ENCODE measurements at regions of chr6 and their contacts with region 1.

Region 1: DNA sequence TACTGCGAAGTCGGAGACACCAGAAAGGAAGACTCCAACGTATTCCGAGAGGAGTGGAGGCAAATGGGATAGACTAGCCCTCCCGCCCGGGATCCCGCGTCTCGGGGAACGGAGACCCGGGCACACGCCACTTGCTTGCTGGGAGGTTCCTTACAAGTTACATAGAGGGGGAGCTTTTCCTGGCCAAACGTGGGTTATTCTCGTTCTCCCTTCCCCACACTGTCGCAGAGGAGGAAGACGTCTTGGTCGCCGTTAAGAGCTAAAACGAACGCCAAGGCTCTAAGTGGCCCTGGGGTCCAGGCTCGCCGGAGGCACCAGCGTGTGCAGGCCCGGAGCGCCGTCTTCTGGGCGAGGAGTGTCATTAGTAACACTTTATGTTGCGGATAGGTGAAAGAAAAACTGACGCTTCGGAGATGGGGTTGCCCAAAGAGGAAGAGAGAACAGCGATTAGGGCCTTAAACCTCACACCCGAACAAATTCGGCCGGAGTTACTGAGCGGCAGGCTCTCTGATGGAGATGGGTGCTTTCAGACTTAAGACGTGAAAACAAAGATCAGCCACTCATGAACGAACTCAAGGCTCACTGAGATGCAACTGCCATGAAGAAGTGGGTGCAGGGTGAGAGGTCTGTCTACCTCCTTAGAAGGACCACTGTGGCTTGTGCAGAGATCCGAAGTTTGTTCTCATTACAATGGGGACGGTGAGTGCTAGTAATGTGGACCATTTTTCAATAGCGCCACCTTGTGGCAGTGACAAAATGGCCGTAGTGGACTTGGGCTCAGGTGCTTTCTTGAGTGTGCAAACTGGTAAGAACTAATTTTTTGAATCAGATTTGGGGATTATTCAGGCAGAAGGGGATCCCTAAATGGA is 11.7 kb upstream of the ZNF311 start:
- DNase-seq: peak; percentile 79
- CTCF ChIP-seq: peak; percentile 71

Region 2: DNA sequence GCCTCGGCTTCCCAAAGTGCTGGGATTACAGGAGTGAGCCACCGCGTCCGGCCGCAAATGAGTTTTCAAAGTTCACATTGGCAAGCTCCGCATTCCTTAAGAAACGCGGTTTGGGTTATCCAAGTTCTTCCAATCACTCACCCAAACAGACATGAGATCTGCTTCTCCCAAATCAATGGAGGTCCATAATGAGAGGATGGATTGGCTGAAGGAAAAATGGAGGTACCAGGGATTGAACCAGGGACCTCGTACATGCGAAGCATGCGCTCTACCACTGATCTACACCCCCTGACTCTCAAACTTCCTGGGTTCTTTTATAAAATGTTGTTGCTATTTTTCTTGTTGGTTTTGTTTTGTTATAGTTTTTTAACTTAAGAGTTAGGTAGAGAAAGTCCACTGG is 321.1 kb before region 1 on chr6:
- in situ Hi-C with region 1: loop called (anchors 10 kb)
- DNase-seq: no peak
- CTCF ChIP-seq: no peak

Region 3: DNA sequence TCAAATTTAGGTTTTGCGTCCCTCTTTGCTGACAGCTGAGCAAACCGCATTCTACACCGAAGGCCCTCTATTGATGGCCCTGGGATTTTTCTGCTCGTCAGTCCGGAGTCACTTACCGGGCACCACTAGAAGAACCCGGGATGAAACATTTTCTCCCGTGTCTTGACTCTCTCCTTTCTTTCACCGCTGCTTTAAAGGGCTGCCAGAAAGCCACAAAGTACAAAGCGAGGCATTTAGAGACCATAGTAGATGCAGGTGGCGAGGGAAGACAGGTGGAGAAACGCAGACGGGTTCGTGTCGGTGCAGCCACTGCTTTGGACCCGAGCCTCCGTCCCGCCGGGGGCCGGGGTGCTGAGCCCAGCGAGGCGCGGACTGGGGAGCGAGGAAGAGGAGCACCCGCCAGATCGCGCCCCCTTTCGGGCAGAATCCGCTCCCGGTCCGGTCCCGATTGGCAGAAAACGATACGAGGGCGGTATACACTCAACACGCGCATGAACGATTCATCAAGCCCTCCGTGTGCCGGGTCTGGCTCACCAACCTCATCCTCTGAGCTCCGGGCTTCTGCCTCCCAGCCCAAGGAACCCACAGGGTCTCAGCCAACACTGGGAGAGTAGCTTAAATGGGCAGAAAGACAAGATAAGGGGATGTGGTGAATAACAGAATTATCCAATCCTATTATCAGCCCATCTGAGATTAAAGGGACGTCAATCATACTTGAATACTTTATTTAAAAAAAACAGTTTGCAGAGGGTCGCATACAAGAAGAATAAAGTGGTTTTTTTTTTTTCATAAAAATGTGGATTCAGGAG is 178.0 kb before region 1 on chr6:
- in situ Hi-C with region 1: loop called (anchors 10 kb)
- DNase-seq: peak; percentile 80
- CTCF ChIP-seq: peak; percentile 75

Measured in GM13976 (cell line).